ENCODE measurements at regions of chr11 and their contacts with region 1.

Region 1: DNA sequence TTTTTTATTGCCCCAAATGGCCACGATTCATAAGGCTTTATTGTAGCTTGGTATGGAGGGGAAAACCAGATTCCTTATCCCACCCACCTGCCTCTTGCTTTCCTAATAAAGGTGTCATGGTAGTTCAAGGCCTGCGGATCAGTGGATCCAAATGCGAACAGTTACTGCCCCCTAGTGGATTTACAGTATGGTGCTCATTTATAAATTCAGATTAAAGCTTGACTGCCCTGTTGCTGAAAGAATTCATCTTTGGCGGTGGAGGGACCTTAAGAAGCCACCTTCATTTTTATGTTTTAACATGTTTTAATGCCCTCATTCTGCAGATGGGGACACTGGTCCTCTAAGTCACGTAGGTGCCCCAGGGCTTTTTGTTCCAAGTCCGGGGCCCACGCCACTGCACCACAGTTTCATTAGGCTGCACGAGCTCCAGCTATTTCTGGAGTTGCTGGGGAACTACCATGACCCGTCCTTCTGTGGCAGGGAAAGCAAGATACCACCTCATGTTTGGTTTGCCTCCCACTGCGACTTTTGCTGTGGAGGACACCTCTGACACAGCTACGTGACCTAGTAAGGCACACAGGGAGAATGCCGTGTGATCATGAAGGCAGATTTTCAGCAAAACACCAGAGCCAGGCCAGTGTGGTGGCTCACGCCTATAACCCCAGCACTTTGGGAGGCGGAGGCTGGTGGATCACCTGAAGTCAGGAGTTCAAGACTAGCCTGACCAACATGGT is 15.6 kb upstream of the INCENP start:
- DNase-seq: no peak
- ATAC-seq: peak in 1 of 2 donors; percentile 19
- H3K4me3 ChIP-seq: no peak overlapping the region
- H3K27ac ChIP-seq: peak overlapping the region; percentile 44
- H3K4me1 ChIP-seq: peaks cover 4% of the 10 kb centered on the region
- H3K27me3 ChIP-seq: no peaks in the 10 kb centered on the region

Region 2: DNA sequence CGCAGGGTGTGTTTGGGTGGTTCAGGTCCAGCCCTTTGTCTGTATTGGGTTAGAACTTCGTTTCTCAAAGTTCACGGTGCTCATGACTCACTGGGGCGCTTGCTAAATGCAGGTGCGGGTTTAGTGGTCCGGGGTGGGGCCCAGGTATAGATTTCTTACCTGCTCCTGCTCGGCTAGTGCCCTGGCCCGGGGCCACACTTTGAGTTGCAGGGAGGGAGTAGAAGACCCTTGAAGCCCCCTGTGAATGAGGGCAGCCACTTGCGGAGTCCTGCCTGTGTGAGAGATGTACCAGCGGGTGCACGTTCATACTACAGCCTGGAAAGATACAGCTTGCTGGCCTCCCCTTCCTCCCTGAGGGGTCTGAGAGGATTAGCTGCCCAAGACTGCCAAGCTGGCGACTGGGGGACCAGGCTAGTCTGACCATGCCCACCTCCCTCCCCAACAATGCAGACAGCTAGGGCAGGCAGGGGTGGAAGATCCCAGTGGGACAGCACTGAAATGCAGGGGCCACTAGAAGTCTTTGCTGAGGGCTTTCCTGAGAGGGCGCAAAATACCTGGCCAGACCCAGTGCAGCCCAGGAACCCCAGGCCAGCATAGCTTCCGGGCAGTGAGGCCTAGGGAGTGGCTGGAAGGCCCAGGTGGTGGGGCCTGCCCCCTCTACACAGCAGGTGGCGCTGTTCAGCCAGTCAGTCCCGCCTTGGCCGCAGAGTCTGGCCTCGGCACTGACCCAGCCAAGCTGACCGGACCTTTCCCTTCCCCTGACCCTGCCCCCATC is 360.8 kb before region 1 on chr11:
- intact Hi-C with region 1: loop called in 1 of 4 experiments (anchors 10 kb)
- DNase-seq: peak; percentile 84 to 94 (median 91)
- ATAC-seq: peak; percentile 80 to 83
- H3K4me3 ChIP-seq: no peak overlapping the region
- H3K27ac ChIP-seq: no peak overlapping the region
- H3K4me1 ChIP-seq: no peaks in the 10 kb centered on the region
- H3K27me3 ChIP-seq: no peaks in the 10 kb centered on the region

Region 3: GRCh38 chr11:61899146-61899841 is 208.9 kb before region 1 on chr11:
- intact Hi-C with region 1: loop called in 1 of 4 experiments (anchors 5 kb)
- DNase-seq: peak; percentile 78 to 95 (median 93)
- ATAC-seq: peak; percentile 71 to 83
- H3K4me3 ChIP-seq: no peak overlapping the region
- H3K27ac ChIP-seq: no peak overlapping the region
- H3K4me1 ChIP-seq: no peaks in the 10 kb centered on the region
- H3K27me3 ChIP-seq: no peaks in the 10 kb centered on the region

Region 4: GRCh38 chr11:62295504-62295903 is 187.3 kb after region 1 on chr11:
- intact Hi-C with region 1: no loop called
- DNase-seq: no peak
- ATAC-seq: no peak
- H3K4me3 ChIP-seq: no peak overlapping the region
- H3K27ac ChIP-seq: no peak overlapping the region
- H3K4me1 ChIP-seq: no peaks in the 10 kb centered on the region
- H3K27me3 ChIP-seq: no peaks in the 10 kb centered on the region